K562 (cell line): ENCODE measurements at regions of chr14 and their contacts with region 1.

Region 1: GRCh38 chr14:49633640-49634546 is 1.2 kb downstream of the DNAAF2 start:
- DNase-seq: peak; percentile 79 to 94 (median 84)
- ATAC-seq: peak; percentile 83
- H3K4me3 ChIP-seq: peak overlapping the region; percentile 91
- H3K27ac ChIP-seq: peak overlapping the region; percentile 99
- H3K4me1 ChIP-seq: peaks cover 8 to 20% of the 10 kb centered on the region in 2 experiments; a peak in 4 of 5 replicates
- H3K27me3 ChIP-seq: no peaks in the 10 kb centered on the region
- CTCF ChIP-seq: peak; percentile 64 to 84 (median 76); a peak in 5 of 6 replicates
- EP300 ChIP-seq: no peak
- POLR2A ChIP-seq: peak; percentile 91
- RAD21 ChIP-seq: peak; percentile 65 to 68

Region 2: GRCh38 chr14:49598485-49599300 is 35.2 kb before region 1 on chr14 and contains the start of gene LRR1:
- CTCF ChIA-PET with region 1: no interaction called
- POLR2A ChIA-PET with region 1: interaction called, 4 read pairs
- in situ Hi-C with region 1: no loop called
- intact Hi-C with region 1: loop called (anchors 2 kb)
- DNase-seq: peak; percentile 59 to 81 (median 64)
- ATAC-seq: peak; percentile 74
- H3K4me3 ChIP-seq: peak within 1 kb of the TSS; percentile 53
- H3K27ac ChIP-seq: peak within 1 kb of the TSS; percentile 96
- H3K4me1 ChIP-seq: peaks cover 12 to 25% of the 10 kb centered on the region in 2 experiments
- H3K27me3 ChIP-seq: no peaks in the 10 kb centered on the region
- CTCF ChIP-seq: no peak
- EP300 ChIP-seq: peak; percentile 16; the same call in 1 of the 2 replicates
- POLR2A ChIP-seq: peak; percentile 95
- RAD21 ChIP-seq: no peak
- polyA plus RNA-seq, gene LRR1: 56.5 to 58.1 TPM

Region 3: GRCh38 chr14:49692811-49693734 is 59.2 kb after region 1 on chr14 and contains the start of gene KLHDC1:
- CTCF ChIA-PET with region 1: no interaction called
- POLR2A ChIA-PET with region 1: interaction called, 5 read pairs
- in situ Hi-C with region 1: no loop called
- intact Hi-C with region 1: loop called (anchors 2 kb)
- DNase-seq: peak; percentile 46 to 69 (median 50)
- ATAC-seq: peak; percentile 68
- H3K4me3 ChIP-seq: peak within 1 kb of the TSS; percentile 65
- H3K27ac ChIP-seq: peak within 1 kb of the TSS; percentile 91
- H3K4me1 ChIP-seq: peaks cover 11% of the 10 kb centered on the region in 2 experiments; a peak in 4 of 5 replicates
- H3K27me3 ChIP-seq: no peaks in the 10 kb centered on the region
- CTCF ChIP-seq: no peak
- EP300 ChIP-seq: no peak
- POLR2A ChIP-seq: peak; percentile 77
- RAD21 ChIP-seq: 0 out of 4 replicates have a peak, but pooled peaks of 1 of the 2 experiments have one; percentile 2
- polyA plus RNA-seq, gene KLHDC1: 0.08 to 0.20 TPM

Region 4: GRCh38 chr14:49828640-49829039 is 194.7 kb after region 1 on chr14:
- CTCF ChIA-PET with region 1: no interaction called
- POLR2A ChIA-PET with region 1: no interaction called
- in situ Hi-C with region 1: no loop called
- intact Hi-C with region 1: loop called (anchors 1 kb)
- DNase-seq: no peak
- ATAC-seq: no peak
- H3K4me3 ChIP-seq: no peak overlapping the region
- H3K27ac ChIP-seq: no peak overlapping the region
- H3K4me1 ChIP-seq: no peaks in the 10 kb centered on the region
- H3K27me3 ChIP-seq: no peaks in the 10 kb centered on the region
- CTCF ChIP-seq: no peak
- EP300 ChIP-seq: no peak
- POLR2A ChIP-seq: no peak
- RAD21 ChIP-seq: no peak

Region 5: DNA sequence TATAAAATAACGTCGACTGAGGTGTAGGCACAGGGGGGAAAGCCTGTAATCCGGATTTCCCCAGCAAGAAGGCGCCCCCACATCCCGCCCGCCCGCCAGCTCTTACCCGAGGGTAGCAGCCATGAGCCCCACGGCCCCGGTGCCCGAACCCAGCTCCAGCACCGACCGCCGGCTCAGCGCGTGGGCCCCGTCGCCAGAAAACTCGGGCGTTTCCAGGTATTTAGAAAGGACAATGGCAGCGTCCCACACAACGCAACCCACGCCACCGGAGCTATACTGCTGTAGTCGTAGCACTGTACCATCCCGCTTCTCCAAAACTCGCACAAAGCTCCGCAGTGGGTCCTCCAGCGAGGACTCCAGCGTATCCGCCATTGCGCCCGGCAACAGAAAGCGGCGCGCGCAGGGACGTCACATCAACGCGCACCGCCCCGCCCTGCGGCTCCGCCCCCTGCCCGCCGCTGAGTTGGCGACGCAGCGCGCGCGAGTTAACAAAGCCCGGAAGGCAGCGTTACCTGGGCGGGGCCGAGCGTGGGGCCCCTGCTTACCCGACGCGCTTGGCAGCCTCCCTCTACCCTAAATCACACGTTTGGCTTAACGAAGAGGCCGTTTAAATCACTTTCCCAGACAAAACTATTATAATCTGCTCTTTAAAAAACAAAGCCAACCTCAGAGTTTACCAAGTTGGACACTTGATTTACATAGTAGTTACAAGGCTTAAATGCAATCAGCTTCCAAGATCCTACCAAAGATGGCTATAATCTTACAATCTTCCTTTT is 482.5 kb after region 1 on chr14 and contains the start of gene VCPKMT:
- CTCF ChIA-PET with region 1: no interaction called
- POLR2A ChIA-PET with region 1: no interaction called
- in situ Hi-C with region 1: loop called (anchors 25 kb)
- intact Hi-C with region 1: no loop called
- DNase-seq: peak; percentile 86 to 94 (median 88)
- ATAC-seq: peak; percentile 100
- H3K4me3 ChIP-seq: peak within 1 kb of the TSS; percentile 76
- H3K27ac ChIP-seq: peak within 1 kb of the TSS; percentile 70
- H3K4me1 ChIP-seq: peaks cover 4 to 6% of the 10 kb centered on the region in 2 experiments; a peak in 4 of 5 replicates
- H3K27me3 ChIP-seq: no peaks in the 10 kb centered on the region
- CTCF ChIP-seq: no peak
- EP300 ChIP-seq: no peak
- POLR2A ChIP-seq: peak; percentile 87
- RAD21 ChIP-seq: no peak; a peak in 1 of 4 replicates
- polyA plus RNA-seq, gene VCPKMT: 2.7 to 3.6 TPM